Body of pancreas (tissue), 4 donors: ENCODE measurements at regions of chr11 and their contacts with region 1.

Region 1: GRCh38 chr11:83713701-83714100 is 427.5 kb upstream of the CCDC90B start:
- DNase-seq: peak; percentile 42 to 71 (median 54)
- ATAC-seq: peak; percentile 58
- H3K4me3 ChIP-seq: no peak overlapping the region
- H3K27ac ChIP-seq: no peak overlapping the region
- H3K4me1 ChIP-seq: no peaks in the 10 kb centered on the region
- H3K27me3 ChIP-seq: no peaks in the 10 kb centered on the region
- CTCF ChIP-seq: no peak
- POLR2A ChIP-seq: no peak

Region 2: GRCh38 chr11:83292709-83293456 is 420.8 kb before region 1 on chr11:
- intact Hi-C with region 1: loop called (anchors 10 kb)
- DNase-seq: peak; percentile 22 to 56 (median 28)
- ATAC-seq: peak; percentile 75
- H3K4me3 ChIP-seq: no peak overlapping the region
- H3K27ac ChIP-seq: no peak overlapping the region
- H3K4me1 ChIP-seq: peaks cover 4% of the 10 kb centered on the region
- H3K27me3 ChIP-seq: no peaks in the 10 kb centered on the region
- CTCF ChIP-seq: peak; percentile 55 to 78 (median 71)
- POLR2A ChIP-seq: no peak